ENCODE measurements at regions of chr11 and their contacts with region 1.

Region 1: DNA sequence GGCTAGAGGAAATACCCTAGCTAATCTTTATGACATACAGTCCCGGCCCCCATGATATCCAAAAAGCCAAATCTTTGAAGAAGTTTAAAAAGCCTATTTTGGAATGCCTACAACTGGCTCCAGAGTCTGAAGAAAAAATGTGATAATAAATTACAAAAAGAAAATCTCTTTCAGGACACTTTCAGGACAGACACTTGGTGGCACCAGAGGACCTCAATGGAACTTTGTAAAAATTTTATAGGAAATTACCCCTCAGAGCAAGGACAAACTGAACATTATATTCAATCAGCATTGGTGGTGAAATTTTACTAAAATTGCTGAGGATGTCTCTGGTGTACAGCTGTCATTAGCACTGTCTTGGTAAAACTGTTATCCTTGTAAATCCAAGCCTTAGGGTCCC is 81.0 kb downstream of the CCDC73 start:
- DNase-seq: no peak
- CTCF ChIP-seq: peak; percentile 35

Region 2: GRCh38 chr11:32792948-32793475 is 79.5 kb after region 1 on chr11:
- CTCF ChIA-PET with region 1: interaction called, 42 read pairs
- POLR2A ChIA-PET with region 1: no interaction called
- DNase-seq: peak; percentile 55
- CTCF ChIP-seq: peak; percentile 54